ENCODE measurements at regions of chr1 and their contacts with region 1.

Region 1: DNA sequence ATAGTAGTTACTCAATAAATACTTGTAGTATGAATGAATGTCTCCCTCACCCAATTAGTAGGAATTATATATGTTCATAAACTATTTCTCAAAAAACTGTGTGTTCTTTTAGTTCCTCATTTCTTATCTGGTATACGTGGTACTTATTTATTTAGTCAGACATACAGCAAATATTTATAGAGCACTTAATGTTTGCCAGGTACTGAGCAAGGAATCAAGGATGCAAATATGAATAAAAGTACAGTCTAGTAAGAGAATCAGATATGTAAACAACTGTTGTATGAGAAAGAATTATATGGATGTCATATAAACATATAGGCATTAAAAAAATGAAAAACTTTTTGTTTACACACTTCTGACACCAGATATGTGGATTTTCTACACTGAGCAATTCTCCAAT is 58.5 kb downstream of the ATF6 start:
- DNase-seq: no peak
- ATAC-seq: no peak
- H3K4me3 ChIP-seq: no peak overlapping the region
- H3K27ac ChIP-seq: no peak overlapping the region
- H3K4me1 ChIP-seq: peaks cover 0 to 7% (median 0%) of the 10 kb centered on the region in 9 donors
- H3K27me3 ChIP-seq: no peaks in the 10 kb centered on the region
- CTCF ChIP-seq: no peak

Region 2: GRCh38 chr1:161879261-161879660 is 54.6 kb after region 1 on chr1:
- intact Hi-C with region 1: loop called in 1 of 10 experiments (anchors 2 kb)
- DNase-seq: no peak
- ATAC-seq: no peak
- H3K4me3 ChIP-seq: no peak overlapping the region
- H3K27ac ChIP-seq: no peak overlapping the region
- H3K4me1 ChIP-seq: peaks cover 0 to 6% (median 0%) of the 10 kb centered on the region in 9 donors
- H3K27me3 ChIP-seq: no peaks in the 10 kb centered on the region
- CTCF ChIP-seq: no peak

Measured in heart right ventricle (tissue), 16 donors.